PC-9 (cell line): ENCODE measurements at regions of chr12 and their contacts with region 1.

Region 1: GRCh38 chr12:49264738-49265515 is at the start of gene TUBA1C:
- DNase-seq: peak; percentile 82 to 96
- H3K4me3 ChIP-seq: peak within 1 kb of the TSS; percentile 94
- H3K27ac ChIP-seq: peak within 1 kb of the TSS; percentile 98
- H3K4me1 ChIP-seq: peaks cover 50% of the 10 kb centered on the region
- H3K27me3 ChIP-seq: no peaks in the 10 kb centered on the region
- CTCF ChIP-seq: 0 out of 2 replicates have a peak, but pooled peaks have one; percentile 18
- total RNA-seq, gene TUBA1C: 449 and 490 TPM in 2 replicates

Region 2: DNA sequence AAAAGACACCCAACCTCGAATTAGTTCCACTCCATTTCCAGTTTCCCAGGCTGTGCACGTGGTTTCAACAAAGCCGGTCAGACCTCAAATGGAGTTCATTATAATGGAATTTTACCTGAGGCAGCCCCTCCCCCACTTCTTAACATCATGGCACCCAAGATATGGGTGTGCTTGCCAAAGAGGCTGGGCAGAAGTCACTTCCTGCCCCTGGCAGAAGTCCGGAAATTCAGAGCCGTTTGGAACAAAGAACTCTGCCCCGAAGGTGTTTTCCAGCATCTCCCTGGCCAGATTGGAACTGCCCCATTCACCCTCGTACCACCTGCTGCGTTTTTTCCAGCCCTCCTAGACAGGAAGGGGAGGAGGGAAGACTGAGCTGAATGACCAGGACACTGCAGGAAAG is 1368.3 kb before region 1 on chr12:
- CTCF ChIA-PET with region 1: no interaction called
- POLR2A ChIA-PET with region 1: no interaction called
- intact Hi-C with region 1: no loop called
- DNase-seq: peak; percentile 86 to 89
- H3K4me3 ChIP-seq: 0 out of 2 replicates have a peak overlapping the region, but pooled peaks have one; percentile 22
- H3K27ac ChIP-seq: peak overlapping the region; percentile 67
- H3K4me1 ChIP-seq: peaks cover 49% of the 10 kb centered on the region
- H3K27me3 ChIP-seq: no peaks in the 10 kb centered on the region
- CTCF ChIP-seq: no peak

Region 3: GRCh38 chr12:48957141-48958048 is 307.5 kb before region 1 on chr12 and contains the start of gene ARF3:
- CTCF ChIA-PET with region 1: no interaction called
- POLR2A ChIA-PET with region 1: no interaction called
- intact Hi-C with region 1: no loop called
- DNase-seq: peak; percentile 82 to 95
- H3K4me3 ChIP-seq: peak within 1 kb of the TSS; percentile 69
- H3K27ac ChIP-seq: peak within 1 kb of the TSS; percentile 33
- H3K4me1 ChIP-seq: peaks cover 24% of the 10 kb centered on the region
- H3K27me3 ChIP-seq: no peaks in the 10 kb centered on the region
- CTCF ChIP-seq: no peak
- total RNA-seq, gene ARF3: 200 and 205 TPM in 2 replicates

Region 4: GRCh38 chr12:49069507-49070346 is 195.2 kb before region 1 on chr12 and contains the start of gene RHEBL1:
- CTCF ChIA-PET with region 1: no interaction called
- POLR2A ChIA-PET with region 1: interaction called, 7 read pairs
- intact Hi-C with region 1: loop called (anchors 10 kb)
- DNase-seq: peak; percentile 88 to 98
- H3K4me3 ChIP-seq: peak within 1 kb of the TSS; percentile 95
- H3K27ac ChIP-seq: peak within 1 kb of the TSS; percentile 39; the same call in 1 of the 2 replicates
- H3K4me1 ChIP-seq: peaks cover 8% of the 10 kb centered on the region; the same call in 1 of the 2 replicates
- H3K27me3 ChIP-seq: no peaks in the 10 kb centered on the region
- CTCF ChIP-seq: no peak; the same call in 1 of the 2 replicates
- total RNA-seq, gene RHEBL1: 2.9 and 3.4 TPM in 2 replicates

Region 5: DNA sequence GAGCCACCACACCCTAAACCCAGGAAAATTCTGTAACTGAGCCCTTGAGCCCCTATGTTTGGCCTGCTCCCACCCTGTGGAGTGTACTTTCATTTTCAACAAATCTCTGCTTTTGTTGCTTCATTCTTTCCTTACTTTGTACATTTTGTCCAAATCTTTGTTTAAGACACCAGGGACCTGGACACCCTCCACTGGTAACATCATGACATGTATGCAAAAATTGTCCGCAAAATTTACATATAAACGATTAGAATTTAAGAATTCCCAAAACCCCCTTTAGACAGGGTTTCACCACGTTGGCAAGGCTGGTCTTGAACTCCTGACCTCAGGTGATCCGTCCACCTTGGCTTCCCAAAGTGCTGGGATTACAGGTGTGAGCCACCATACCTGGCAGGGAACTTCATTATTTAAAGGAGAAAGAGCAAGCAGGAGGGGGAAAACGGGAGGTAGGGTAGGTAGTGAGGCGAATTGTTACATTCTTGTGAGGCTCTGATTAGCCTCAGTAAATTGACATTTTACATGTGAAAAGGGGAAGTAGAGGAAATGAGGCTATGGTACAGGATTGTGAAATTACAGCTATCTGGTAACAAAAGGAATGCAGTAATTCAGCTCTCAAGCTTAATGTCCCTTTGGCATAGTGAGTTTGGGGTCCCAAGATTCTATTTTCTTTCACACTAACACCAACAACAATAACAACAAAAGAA is 103.7 kb before region 1 on chr12:
- CTCF ChIA-PET with region 1: no interaction called
- POLR2A ChIA-PET with region 1: no interaction called
- intact Hi-C with region 1: no loop called
- DNase-seq: no peak
- H3K4me3 ChIP-seq: no peak overlapping the region
- H3K27ac ChIP-seq: no peak overlapping the region
- H3K4me1 ChIP-seq: no peaks in the 10 kb centered on the region
- H3K27me3 ChIP-seq: no peaks in the 10 kb centered on the region
- CTCF ChIP-seq: no peak

Region 6: GRCh38 chr12:49232940-49233841 is 31.7 kb before region 1 on chr12:
- CTCF ChIA-PET with region 1: interaction called, 6 read pairs
- POLR2A ChIA-PET with region 1: interaction called, 3 read pairs
- intact Hi-C with region 1: loop called (anchors 1 kb)
- DNase-seq: no peak
- H3K4me3 ChIP-seq: no peak overlapping the region
- H3K27ac ChIP-seq: no peak overlapping the region
- H3K4me1 ChIP-seq: 0 out of 2 replicates have a peak, but pooled peaks cover 3% of the 10 kb centered on the region
- H3K27me3 ChIP-seq: no peaks in the 10 kb centered on the region
- CTCF ChIP-seq: no peak

Region 7: DNA sequence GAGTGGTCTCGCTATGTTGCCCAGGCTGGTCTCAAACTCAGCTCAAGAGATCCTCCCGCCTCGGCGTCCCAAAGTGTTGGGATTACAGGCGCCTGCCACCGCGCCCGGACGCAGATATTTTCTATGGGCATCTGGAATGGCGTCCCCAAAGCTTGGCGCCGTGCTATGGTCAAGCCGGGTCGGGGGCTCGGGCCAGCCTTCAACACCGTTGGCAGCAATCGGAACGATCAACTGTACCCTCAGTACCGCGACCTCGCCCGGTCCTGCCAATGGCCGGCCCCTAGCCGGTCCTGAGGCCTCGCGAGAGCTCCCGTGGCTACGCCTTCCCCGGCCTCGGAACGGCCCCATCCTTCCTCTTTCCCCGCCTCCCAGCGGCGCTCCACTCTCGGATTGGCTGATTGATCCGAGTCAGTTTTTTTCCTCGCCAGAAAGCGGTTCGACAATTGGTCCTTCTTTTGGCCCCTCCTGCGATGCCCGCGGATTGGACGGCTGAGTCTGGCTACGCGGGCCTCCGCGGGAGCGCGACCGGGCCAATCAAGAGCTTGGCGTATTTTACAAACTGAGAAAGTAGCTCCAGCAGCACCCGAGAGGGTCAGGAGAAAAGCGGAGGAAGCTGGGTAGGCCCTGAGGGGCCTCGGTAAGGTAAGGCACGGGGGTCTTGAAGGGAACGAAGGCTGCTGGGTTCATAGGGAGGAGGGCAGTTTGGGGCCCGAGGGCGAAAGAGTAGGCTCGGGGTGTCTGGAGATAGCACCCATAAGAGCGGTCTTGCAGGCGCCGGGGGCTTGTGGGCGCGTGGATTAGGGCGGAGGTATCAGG is 58.0 kb after region 1 on chr12 and contains the start of gene TROAP:
- CTCF ChIA-PET with region 1: no interaction called
- POLR2A ChIA-PET with region 1: interaction called, 13 read pairs
- intact Hi-C with region 1: no loop called
- DNase-seq: peak; percentile 93 to 98
- H3K4me3 ChIP-seq: peak within 1 kb of the TSS; percentile 68
- H3K27ac ChIP-seq: 0 out of 2 replicates have a peak within 1 kb of the TSS, but pooled peaks have one; percentile 6
- H3K4me1 ChIP-seq: peaks cover 9% of the 10 kb centered on the region; the same call in 1 of the 2 replicates
- H3K27me3 ChIP-seq: no peaks in the 10 kb centered on the region
- CTCF ChIP-seq: no peak
- total RNA-seq, gene TROAP: 79.4 and 79.9 TPM in 2 replicates

Region 8: GRCh38 chr12:49540229-49541136 is 275.6 kb after region 1 on chr12:
- CTCF ChIA-PET with region 1: no interaction called
- POLR2A ChIA-PET with region 1: interaction called, 25 read pairs
- intact Hi-C with region 1: no loop called
- DNase-seq: peak in 1 of 2 experiments; percentile 64
- H3K4me3 ChIP-seq: no peak overlapping the region
- H3K27ac ChIP-seq: no peak overlapping the region
- H3K4me1 ChIP-seq: peaks cover 21% of the 10 kb centered on the region
- H3K27me3 ChIP-seq: peaks cover 18% of the 10 kb centered on the region
- CTCF ChIP-seq: no peak

Region 9: GRCh38 chr12:49945394-49946080 is 680.6 kb after region 1 on chr12:
- CTCF ChIA-PET with region 1: no interaction called
- POLR2A ChIA-PET with region 1: no interaction called
- intact Hi-C with region 1: no loop called
- DNase-seq: peak; percentile 62 to 78
- H3K4me3 ChIP-seq: no peak overlapping the region
- H3K27ac ChIP-seq: no peak overlapping the region
- H3K4me1 ChIP-seq: peaks cover 29% of the 10 kb centered on the region
- H3K27me3 ChIP-seq: no peaks in the 10 kb centered on the region
- CTCF ChIP-seq: peak; percentile 82